CD4-positive, alpha-beta memory T cell (primary cell): ENCODE measurements at regions of chr2 and their contacts with region 1.

Region 1: DNA sequence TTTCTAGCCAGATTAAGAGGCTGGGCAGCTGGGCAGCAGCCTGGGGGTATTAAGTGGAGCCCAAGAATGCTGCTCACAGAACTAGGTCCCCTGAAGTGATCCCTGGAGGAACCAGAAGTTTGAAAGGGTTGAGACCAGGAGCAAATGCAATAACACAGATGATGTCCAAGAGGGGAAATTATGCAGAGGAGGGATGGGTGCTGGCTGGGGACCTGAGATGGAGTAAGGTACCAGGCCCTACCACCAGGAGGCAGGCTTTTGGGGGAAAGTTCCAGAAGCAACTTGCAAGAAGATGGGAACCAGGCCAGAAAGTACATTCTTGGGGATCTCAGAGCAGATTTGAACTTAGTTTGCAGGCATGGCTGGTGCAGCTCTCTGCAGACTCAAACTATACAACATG is 175.1 kb downstream of the NCK2 start:
- DNase-seq: peak; percentile 46 to 57 (median 54)
- H3K4me3 ChIP-seq: no peak overlapping the region
- H3K4me3 Mint-ChIP-seq: no peak overlapping the region
- H3K27ac ChIP-seq: no peak overlapping the region
- H3K27ac Mint-ChIP-seq: no peak overlapping the region
- H3K4me1 ChIP-seq: peaks cover 9% of the 10 kb centered on the region
- H3K4me1 Mint-ChIP-seq: peaks cover 22 to 39% (median 34%) of the 10 kb centered on the region in 4 donors
- H3K27me3 ChIP-seq: no peaks in the 10 kb centered on the region
- H3K27me3 Mint-ChIP-seq: no peaks in the 10 kb centered on the region

Region 2: GRCh38 chr2:105691947-105692390 is 227.9 kb before region 1 on chr2:
- CTCF ChIA-PET with region 1: no interaction called
- POLR2A ChIA-PET with region 1: no interaction called
- intact Hi-C with region 1: no loop called
- DNase-seq: no peak
- H3K4me3 ChIP-seq: no peak overlapping the region
- H3K4me3 Mint-ChIP-seq: no peak overlapping the region
- H3K27ac ChIP-seq: no peak overlapping the region
- H3K27ac Mint-ChIP-seq: no peak overlapping the region
- H3K4me1 ChIP-seq: no peaks in the 10 kb centered on the region
- H3K4me1 Mint-ChIP-seq: peaks cover 0 to 5% (median 0%) of the 10 kb centered on the region in 4 donors
- H3K27me3 ChIP-seq: no peaks in the 10 kb centered on the region
- H3K27me3 Mint-ChIP-seq: peaks cover 0 to under 1% of the 10 kb centered on the region in 2 donors

Region 3: DNA sequence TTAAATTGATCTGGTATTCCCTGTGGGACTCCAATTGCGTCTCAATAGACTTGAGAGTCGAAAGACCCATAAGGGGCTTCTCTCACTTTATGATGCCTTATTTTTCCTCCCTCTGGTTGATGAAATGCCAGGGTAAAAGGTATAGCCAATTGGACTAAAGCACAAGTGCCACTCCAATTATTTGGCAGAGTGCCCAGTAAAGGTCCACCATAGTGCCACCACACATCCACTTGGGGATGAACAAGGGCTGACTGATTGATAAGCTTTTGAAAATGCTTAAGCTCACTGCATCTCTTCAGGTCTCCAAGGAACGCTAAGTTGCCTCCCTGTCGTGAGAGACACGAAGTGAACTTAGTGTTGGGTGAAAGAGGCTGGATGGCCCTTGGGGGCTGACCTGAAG is 62.6 kb after region 1 on chr2:
- CTCF ChIA-PET with region 1: no interaction called
- POLR2A ChIA-PET with region 1: no interaction called
- intact Hi-C with region 1: loop called (anchors 10 kb)
- DNase-seq: no peak
- H3K4me3 ChIP-seq: no peak overlapping the region
- H3K4me3 Mint-ChIP-seq: no peak overlapping the region
- H3K27ac ChIP-seq: no peak overlapping the region
- H3K27ac Mint-ChIP-seq: no peak overlapping the region
- H3K4me1 ChIP-seq: peaks cover under 1% of the 10 kb centered on the region
- H3K4me1 Mint-ChIP-seq: peaks cover 9 to 20% (median 16%) of the 10 kb centered on the region in 4 donors
- H3K27me3 ChIP-seq: no peaks in the 10 kb centered on the region
- H3K27me3 Mint-ChIP-seq: no peaks in the 10 kb centered on the region

Region 4: DNA sequence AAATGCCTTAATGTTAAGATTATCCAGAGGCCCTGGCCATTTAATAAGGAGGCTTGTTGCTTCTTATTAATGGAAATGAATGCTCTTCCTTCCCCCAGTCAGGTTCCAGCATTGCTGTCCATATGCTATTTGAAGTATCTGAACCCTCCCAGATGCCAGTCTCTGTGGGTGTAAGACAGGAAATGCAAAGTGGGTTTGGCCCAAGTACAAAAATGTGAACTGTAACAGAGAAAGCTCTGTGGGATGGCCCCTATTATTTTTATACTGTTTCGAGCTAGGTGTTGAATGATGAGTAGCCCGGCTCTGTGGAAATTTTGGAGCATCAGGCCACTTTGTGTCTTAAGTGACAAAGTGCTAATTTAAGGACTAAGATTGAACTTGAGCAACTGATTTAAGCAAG is 133.3 kb after region 1 on chr2:
- CTCF ChIA-PET with region 1: interaction called, 14 read pairs
- POLR2A ChIA-PET with region 1: no interaction called
- intact Hi-C with region 1: no loop called
- DNase-seq: peak in 4 of 5 donors; percentile 31 to 39 (median 36)
- H3K4me3 ChIP-seq: no peak overlapping the region
- H3K4me3 Mint-ChIP-seq: peak overlapping the region; percentile 33 to 85 (median 71)
- H3K27ac ChIP-seq: no peak overlapping the region
- H3K27ac Mint-ChIP-seq: peak overlapping the region in 4 of 7 donors; percentile 21 to 82 (median 71)
- H3K4me1 ChIP-seq: peaks cover 65% of the 10 kb centered on the region
- H3K4me1 Mint-ChIP-seq: peaks cover 48 to 72% (median 63%) of the 10 kb centered on the region in 4 donors
- H3K27me3 ChIP-seq: no peaks in the 10 kb centered on the region
- H3K27me3 Mint-ChIP-seq: no peaks in the 10 kb centered on the region